Activated CD4-positive, alpha-beta T cell treated with anti-CD3 and anti-CD28 coated beads, Interleukin-2, amount 10 ng/mL, durations not matched to agents 24 days and 14 days (primary cell): ENCODE measurements at regions of chr6 and their contacts with region 1.

Region 1: DNA sequence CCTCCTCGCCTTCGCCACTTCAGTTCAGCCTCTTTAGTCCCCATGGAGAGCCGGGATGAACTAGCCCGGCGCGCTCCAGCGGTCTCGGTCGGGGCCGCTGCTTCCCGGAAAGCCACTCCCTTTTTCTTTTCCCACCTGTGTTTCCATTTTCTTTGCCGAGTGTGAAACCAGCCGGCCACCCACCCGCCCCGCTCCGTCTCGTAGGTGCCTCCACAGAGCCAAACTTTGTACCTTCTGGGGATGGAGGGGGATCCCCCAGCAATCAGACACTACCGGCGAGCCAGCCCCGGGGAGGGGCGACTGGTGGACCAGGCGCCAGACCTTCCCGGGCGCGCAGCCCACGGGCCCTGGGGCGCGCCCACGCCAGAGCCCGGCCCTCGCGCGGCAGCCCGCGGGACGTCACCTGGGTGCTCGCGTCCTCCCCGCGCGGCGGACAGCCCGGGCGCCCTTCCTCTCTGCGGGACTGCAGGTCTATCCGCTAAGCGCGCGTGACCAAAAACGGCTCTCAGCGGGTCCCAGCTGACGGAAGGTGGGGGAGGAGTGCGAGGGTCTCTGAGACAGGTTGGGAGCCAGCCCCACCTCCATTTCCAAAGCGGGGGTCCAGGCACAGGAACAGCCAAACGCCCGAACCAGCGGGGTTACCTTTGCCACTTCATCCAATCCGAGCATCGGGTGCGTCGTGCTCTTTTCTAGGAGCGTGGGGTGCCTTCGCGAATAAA is at the start of gene MCHR2:
- DNase-seq: no peak
- H3K4me3 Mint-ChIP-seq: no peak within 1 kb of the TSS
- H3K27ac Mint-ChIP-seq: no peak within 1 kb of the TSS
- H3K4me1 Mint-ChIP-seq: no peaks in the 10 kb centered on the region
- H3K27me3 Mint-ChIP-seq: peaks cover 37% of the 10 kb centered on the region
- total RNA-seq, gene MCHR2: not detected in 2 replicates

Region 2: GRCh38 chr6:99879431-99879830 is 114.3 kb before region 1 on chr6:
- intact Hi-C with region 1: loop called (anchors 10 kb)
- DNase-seq: no peak
- H3K4me3 Mint-ChIP-seq: no peak overlapping the region
- H3K27ac Mint-ChIP-seq: no peak overlapping the region
- H3K4me1 Mint-ChIP-seq: no peaks in the 10 kb centered on the region
- H3K27me3 Mint-ChIP-seq: peaks cover 6% of the 10 kb centered on the region

Region 3: DNA sequence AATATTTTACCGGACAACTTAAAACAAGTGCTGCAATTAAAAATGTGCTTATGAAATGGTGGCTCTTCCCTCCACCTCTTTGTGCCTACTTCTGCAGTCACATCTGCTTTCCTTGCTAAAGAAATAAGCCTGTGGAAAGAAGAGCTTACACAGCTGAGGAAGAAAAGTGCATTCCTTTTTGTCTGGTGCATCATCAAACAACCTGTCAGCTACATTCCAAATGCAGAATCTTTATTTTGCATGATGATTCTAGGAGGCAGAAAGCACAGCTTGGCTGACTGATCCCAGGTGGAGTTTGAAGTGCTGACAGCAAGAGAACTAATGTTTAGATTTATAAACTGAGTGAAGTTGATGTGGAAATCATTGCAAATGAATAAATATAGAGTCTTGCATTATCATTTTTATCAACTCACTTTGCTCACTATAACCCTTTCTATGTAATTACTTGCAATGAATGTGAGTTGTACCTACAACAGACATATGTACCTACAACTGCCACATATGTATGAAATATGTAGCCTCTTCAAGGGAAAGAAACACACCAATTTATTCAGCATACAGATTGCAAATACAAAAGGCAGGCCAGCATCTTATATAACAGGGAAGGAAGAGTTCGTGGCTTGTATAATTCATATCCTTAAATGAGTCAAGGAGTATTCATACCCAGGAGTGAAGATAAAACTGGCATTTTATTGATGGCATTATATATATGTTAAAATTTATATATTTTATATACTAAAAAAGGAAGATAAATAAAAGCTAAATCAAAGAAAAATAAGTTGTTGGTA is 223.7 kb after region 1 on chr6:
- intact Hi-C with region 1: no loop called
- DNase-seq: no peak
- H3K4me3 Mint-ChIP-seq: no peak overlapping the region
- H3K27ac Mint-ChIP-seq: no peak overlapping the region
- H3K4me1 Mint-ChIP-seq: no peaks in the 10 kb centered on the region
- H3K27me3 Mint-ChIP-seq: no peaks in the 10 kb centered on the region